Panc1 (cell line): ENCODE measurements at regions of chr2 and their contacts with region 1.

Region 1: GRCh38 chr2:27461118-27461517 is 18.9 kb downstream of the KRTCAP3 start:
- DNase-seq: no peak
- ATAC-seq: no peak
- H3K4me3 ChIP-seq: no peak overlapping the region
- H3K27ac ChIP-seq: no peak overlapping the region
- H3K4me1 ChIP-seq: no peaks in the 10 kb centered on the region
- H3K27me3 ChIP-seq: no peaks in the 10 kb centered on the region
- CTCF ChIP-seq: no peak

Region 2: GRCh38 chr2:27148801-27149439 is 312.2 kb before region 1 on chr2 and contains the start of gene TCF23:
- CTCF ChIA-PET with region 1: no interaction called
- POLR2A ChIA-PET with region 1: no interaction called
- in situ Hi-C with region 1: no loop called
- intact Hi-C with region 1: no loop called
- DNase-seq: no peak
- ATAC-seq: no peak
- H3K4me3 ChIP-seq: no peak within 1 kb of the TSS
- H3K27ac ChIP-seq: no peak within 1 kb of the TSS
- H3K4me1 ChIP-seq: no peaks in the 10 kb centered on the region
- H3K27me3 ChIP-seq: 0 out of 2 replicates have a peak, but pooled peaks cover under 1% of the 10 kb centered on the region
- CTCF ChIP-seq: no peak
- total RNA-seq, gene TCF23: 0.03 TPM

Region 3: DNA sequence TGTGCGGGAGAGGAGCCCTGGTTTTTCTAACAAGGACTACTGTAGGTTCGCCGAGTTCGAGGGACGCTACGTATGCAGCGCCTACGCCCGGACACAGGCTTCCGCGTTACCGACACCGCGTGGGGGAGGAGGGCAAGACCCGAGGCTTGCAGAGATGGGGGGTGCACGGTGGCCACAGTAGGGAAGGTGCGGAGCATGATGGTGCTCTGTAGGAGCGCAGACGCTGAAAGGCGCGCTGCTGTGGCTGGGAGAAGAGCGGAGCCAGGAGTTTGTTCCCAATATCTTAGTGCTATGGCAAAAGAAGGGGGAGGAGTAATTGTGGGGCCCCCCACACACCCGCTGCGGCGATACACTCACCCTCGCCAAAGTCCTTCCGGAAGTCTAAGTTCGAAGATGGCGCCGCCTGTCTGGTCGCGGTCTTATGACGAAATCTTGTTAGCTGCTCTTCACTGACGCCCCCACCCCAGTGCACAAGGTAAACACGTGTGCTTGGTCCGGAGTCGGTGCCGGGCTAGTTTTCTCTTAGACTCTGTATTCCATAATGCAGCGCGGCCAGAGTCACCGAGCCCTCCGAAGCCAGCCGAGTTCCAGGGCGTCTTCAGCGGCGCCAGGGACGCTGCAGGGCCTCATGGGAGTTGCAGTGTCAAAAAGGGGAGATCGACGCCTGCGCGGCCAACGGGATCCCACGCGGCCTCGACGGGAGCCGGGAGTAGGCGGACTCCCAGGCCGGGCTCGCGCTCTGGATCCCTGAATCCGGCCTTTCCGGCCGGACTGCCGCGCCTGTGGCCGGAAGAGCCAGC is 104.5 kb before region 1 on chr2 and contains the start of gene GTF3C2:
- CTCF ChIA-PET with region 1: no interaction called
- POLR2A ChIA-PET with region 1: no interaction called
- in situ Hi-C with region 1: no loop called
- intact Hi-C with region 1: no loop called
- DNase-seq: peak; percentile 91
- ATAC-seq: peak; percentile 95
- H3K4me3 ChIP-seq: peak within 1 kb of the TSS; percentile 62 to 99
- H3K27ac ChIP-seq: peak within 1 kb of the TSS; percentile 93
- H3K4me1 ChIP-seq: peaks cover 19% of the 10 kb centered on the region
- H3K27me3 ChIP-seq: no peaks in the 10 kb centered on the region
- CTCF ChIP-seq: no peak
- total RNA-seq, gene GTF3C2: 77.7 TPM

Region 4: DNA sequence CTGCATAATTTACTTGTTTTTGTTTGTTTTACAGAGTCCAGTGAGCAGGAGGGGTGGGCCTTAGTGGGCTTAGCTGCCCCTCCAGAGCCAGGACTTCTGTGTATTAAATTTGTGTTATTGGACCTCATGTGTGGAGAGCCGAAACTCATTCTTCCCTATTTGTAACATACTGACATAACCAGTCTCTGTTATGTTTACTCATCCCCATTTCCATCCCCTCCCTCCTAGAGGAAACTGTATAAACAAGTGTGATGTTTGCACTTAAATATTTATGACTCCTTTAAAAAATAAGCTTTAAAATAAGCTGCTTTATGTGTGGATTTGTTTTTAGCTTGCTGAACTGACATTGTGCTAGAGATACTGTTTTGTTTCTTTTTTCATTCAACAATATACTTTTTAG is 135.5 kb after region 1 on chr2:
- CTCF ChIA-PET with region 1: no interaction called
- POLR2A ChIA-PET with region 1: interaction called, 13 read pairs
- in situ Hi-C with region 1: no loop called
- intact Hi-C with region 1: no loop called
- DNase-seq: no peak
- ATAC-seq: no peak
- H3K4me3 ChIP-seq: no peak overlapping the region
- H3K27ac ChIP-seq: no peak overlapping the region
- H3K4me1 ChIP-seq: no peaks in the 10 kb centered on the region
- H3K27me3 ChIP-seq: no peaks in the 10 kb centered on the region
- CTCF ChIP-seq: no peak

Region 5: DNA sequence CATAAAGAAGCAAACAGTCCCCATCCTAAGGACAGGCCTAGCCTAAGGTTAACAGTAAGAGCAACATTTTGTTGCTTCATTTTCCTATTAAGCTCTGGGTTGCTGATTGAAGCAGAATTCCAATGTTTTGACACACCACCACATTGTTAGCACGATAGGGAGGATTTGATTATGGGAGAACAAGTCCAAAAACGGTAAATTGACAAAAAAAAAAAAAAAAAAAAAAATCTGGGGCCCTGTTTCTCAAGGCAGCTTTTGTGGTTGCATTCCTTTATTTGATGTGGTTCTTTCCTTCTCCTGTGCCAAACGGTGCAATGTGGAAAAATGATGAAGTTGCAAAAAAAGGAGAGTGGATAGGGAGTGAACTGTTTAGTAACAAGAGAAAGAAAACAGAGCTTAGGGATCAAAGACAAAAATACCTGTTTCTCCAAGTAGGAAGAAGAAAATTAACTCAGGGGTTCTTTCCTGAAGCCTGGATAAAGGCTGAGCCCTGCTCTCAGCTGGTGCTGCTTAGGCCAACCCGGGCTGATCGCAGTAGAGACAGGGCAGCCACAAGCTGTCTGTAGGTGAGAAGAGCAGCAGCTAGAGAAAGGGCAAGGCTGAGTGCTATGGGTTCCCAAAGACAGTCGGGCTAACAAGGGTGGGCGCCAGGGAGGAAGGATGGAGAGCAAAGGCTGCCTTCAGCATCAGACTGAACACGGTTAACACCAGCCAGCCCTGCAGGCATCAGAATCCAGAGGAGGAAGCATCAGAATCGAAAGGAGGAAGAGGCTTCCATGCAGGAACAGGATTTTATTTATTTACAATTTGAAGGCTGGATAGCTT is 763.7 kb after region 1 on chr2:
- CTCF ChIA-PET with region 1: no interaction called
- POLR2A ChIA-PET with region 1: no interaction called
- in situ Hi-C with region 1: no loop called
- intact Hi-C with region 1: no loop called
- DNase-seq: no peak
- ATAC-seq: no peak
- H3K4me3 ChIP-seq: no peak overlapping the region
- H3K27ac ChIP-seq: no peak overlapping the region
- H3K4me1 ChIP-seq: no peaks in the 10 kb centered on the region
- H3K27me3 ChIP-seq: no peaks in the 10 kb centered on the region
- CTCF ChIP-seq: no peak